Endothelial cell of umbilical vein (primary cell): ENCODE measurements at regions of chr19 and their contacts with region 1.

Region 1: GRCh38 chr19:588093-588740 is 1.5 kb upstream of the HCN2 start:
- DNase-seq: peak; percentile 59
- H3K4me3 ChIP-seq: no peak overlapping the region
- H3K27ac ChIP-seq: no peak overlapping the region
- H3K4me1 ChIP-seq: no peaks in the 10 kb centered on the region
- H3K27me3 ChIP-seq: peaks cover 10 to 13% of the 10 kb centered on the region in 2 experiments
- CTCF ChIP-seq: peak; percentile 62 to 78
- POLR2A ChIP-seq: no peak

Region 2: DNA sequence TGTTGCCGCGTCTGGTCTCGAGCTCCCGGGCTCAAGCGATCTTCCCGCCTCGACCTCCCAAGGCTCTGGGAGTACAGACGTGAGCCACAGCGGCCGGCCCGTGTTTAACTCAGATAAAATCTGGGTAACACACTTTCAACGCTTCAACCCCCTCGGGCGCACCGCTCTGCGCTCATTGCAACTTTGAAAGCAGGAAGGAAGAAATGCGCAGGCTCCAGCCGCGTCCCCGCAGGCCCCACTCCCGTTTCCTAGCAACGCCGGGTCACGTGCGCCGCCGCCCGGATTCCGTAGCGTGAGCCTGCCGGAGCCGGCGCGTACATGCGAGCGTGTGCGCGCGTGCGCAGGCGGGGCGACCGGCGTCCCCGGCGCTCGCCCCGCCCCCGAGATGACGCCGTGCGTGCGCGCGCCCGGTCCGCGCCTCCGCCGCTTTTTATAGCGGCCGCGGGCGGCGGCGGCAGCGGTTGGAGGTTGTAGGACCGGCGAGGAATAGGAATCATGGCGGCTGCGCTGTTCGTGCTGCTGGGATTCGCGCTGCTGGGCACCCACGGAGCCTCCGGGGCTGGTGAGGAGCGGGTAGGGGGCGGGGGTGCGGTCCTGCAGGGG is 16.0 kb before region 1 on chr19 and contains the start of gene BSG:
- CTCF ChIA-PET with region 1: interaction called, 21 read pairs
- POLR2A ChIA-PET with region 1: interaction called, 4 read pairs
- dilution Hi-C with region 1: no loop called
- intact Hi-C with region 1: loop called (anchors 2 kb)
- DNase-seq: peak; percentile 97
- H3K4me3 ChIP-seq: peak within 1 kb of the TSS; percentile 68 to 92 (median 88)
- H3K27ac ChIP-seq: peak within 1 kb of the TSS; percentile 72
- H3K4me1 ChIP-seq: peaks cover 28% of the 10 kb centered on the region
- H3K27me3 ChIP-seq: no peaks in the 10 kb centered on the region
- CTCF ChIP-seq: no peak
- POLR2A ChIP-seq: peak; percentile 99
- total RNA-seq, gene BSG: 466 and 485 TPM in 2 replicates

Region 3: GRCh38 chr19:633068-633785 is 45.0 kb after region 1 on chr19 and contains the start of gene POLRMT:
- CTCF ChIA-PET with region 1: interaction called, 6 read pairs
- POLR2A ChIA-PET with region 1: no interaction called
- dilution Hi-C with region 1: no loop called
- intact Hi-C with region 1: loop called (anchors 2 kb)
- DNase-seq: peak; percentile 98
- H3K4me3 ChIP-seq: peak within 1 kb of the TSS; percentile 70 to 88 (median 85)
- H3K27ac ChIP-seq: peak within 1 kb of the TSS; percentile 48
- H3K4me1 ChIP-seq: peaks cover 16% of the 10 kb centered on the region
- H3K27me3 ChIP-seq: no peaks in the 10 kb centered on the region
- CTCF ChIP-seq: peak in 1 of 2 donors; percentile 13
- POLR2A ChIP-seq: peak; percentile 58
- total RNA-seq, gene POLRMT: 46.7 and 50.6 TPM in 2 replicates

Region 4: DNA sequence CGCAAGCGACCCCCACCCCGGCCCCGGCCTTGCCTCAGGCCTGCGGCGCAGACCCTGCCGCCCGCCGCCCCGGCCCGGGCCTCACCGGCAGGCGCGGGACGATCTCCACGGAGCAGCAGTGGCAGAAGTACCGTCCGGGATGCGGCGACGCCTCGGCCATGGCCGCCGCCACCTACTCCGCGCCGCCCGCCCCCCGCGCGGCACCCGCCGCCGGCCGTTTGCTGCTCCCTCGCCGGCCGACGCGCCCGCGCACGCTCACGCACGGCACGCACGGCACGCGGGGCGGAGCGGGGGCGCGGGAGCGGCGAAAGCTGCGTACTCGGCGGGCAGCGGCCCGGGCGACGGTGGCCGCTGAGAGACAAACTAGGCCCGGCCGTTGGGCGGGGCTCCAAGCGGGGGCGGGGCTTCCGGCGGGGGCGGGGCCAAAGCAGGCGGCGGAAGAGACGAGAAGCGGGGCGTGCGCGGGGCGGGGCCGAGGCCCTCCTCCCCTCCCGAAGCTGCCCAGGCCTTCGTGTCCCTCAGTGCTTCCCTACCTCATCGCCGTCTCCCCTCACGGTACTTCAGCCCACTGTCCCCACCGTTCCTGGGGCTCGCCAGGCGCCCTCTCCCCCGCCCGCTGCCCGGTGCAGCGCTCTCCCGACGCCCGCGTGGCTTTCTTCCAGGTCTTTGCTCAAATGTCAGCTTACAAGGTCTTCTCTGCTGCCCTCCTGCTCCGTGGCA is 74.9 kb after region 1 on chr19 and contains the start of gene RNF126:
- CTCF ChIA-PET with region 1: interaction called, 8 read pairs
- POLR2A ChIA-PET with region 1: no interaction called
- dilution Hi-C with region 1: no loop called
- intact Hi-C with region 1: loop called (anchors 2 kb)
- DNase-seq: peak; percentile 89
- H3K4me3 ChIP-seq: peak within 1 kb of the TSS; percentile 73 to 89 (median 86)
- H3K27ac ChIP-seq: peak within 1 kb of the TSS; percentile 60
- H3K4me1 ChIP-seq: peaks cover 19% of the 10 kb centered on the region
- H3K27me3 ChIP-seq: no peaks in the 10 kb centered on the region
- CTCF ChIP-seq: no peak
- POLR2A ChIP-seq: peak; percentile 88
- total RNA-seq, gene RNF126: 58.4 and 61.3 TPM in 2 replicates

Region 5: DNA sequence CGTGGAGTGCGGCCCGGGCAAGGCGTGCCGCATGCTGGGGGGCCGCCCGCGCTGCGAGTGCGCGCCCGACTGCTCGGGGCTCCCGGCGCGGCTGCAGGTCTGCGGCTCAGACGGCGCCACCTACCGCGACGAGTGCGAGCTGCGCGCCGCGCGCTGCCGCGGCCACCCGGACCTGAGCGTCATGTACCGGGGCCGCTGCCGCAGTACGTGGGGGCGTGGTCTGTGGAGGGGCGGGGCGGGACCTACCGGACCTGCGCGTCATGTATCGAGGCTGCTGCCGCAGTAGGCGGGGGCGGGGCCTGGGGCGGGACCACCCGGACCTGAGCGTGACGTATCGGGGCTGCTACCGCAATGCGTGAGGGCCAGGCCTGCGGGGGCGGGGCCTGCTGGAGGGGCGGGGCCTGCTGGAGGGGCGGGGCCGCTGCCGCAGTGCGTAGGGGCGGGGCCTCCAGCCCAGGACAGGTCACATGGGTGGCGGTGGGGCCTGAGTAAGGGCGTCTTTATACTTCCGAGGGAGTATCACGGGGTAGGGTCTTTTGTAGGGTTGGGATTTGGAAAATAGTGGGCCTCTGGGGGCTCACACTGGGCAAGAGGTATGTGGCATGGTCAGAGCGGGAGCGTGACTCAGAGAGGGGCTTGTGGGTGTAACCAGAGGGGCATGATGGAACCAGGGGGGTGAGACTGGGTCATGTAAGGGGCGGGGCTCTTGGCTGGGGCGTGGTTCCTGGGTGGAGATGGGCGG is 92.2 kb after region 1 on chr19:
- CTCF ChIA-PET with region 1: interaction called, 11 read pairs
- POLR2A ChIA-PET with region 1: no interaction called
- dilution Hi-C with region 1: no loop called
- intact Hi-C with region 1: no loop called
- DNase-seq: peak; percentile 99
- H3K4me3 ChIP-seq: peak overlapping the region; percentile 31 to 55 (median 49)
- H3K27ac ChIP-seq: peak overlapping the region; percentile 77
- H3K4me1 ChIP-seq: peaks cover 16% of the 10 kb centered on the region
- H3K27me3 ChIP-seq: no peaks in the 10 kb centered on the region
- CTCF ChIP-seq: peak; percentile 33 to 52
- POLR2A ChIP-seq: no peak